Head of caudate nucleus (tissue), 42 donors: ENCODE measurements at regions of chr7 and their contacts with region 1.

Region 1: GRCh38 chr7:151351027-151351426 is 9.4 kb downstream of the NUB1 start:
- DNase-seq: no peak

Region 2: GRCh38 chr7:151315038-151315655 is 35.9 kb before region 1 on chr7:
- intact Hi-C with region 1: loop called (anchors 5 kb)
- DNase-seq: peak; percentile 51 to 93 (median 78)

Region 3: GRCh38 chr7:151472644-151473380 is 121.8 kb after region 1 on chr7:
- intact Hi-C with region 1: no loop called
- DNase-seq: peak in 1 of 42 donors; percentile 16